A673 (cell line): ENCODE measurements at regions of chr1 and their contacts with region 1.

Region 1: DNA sequence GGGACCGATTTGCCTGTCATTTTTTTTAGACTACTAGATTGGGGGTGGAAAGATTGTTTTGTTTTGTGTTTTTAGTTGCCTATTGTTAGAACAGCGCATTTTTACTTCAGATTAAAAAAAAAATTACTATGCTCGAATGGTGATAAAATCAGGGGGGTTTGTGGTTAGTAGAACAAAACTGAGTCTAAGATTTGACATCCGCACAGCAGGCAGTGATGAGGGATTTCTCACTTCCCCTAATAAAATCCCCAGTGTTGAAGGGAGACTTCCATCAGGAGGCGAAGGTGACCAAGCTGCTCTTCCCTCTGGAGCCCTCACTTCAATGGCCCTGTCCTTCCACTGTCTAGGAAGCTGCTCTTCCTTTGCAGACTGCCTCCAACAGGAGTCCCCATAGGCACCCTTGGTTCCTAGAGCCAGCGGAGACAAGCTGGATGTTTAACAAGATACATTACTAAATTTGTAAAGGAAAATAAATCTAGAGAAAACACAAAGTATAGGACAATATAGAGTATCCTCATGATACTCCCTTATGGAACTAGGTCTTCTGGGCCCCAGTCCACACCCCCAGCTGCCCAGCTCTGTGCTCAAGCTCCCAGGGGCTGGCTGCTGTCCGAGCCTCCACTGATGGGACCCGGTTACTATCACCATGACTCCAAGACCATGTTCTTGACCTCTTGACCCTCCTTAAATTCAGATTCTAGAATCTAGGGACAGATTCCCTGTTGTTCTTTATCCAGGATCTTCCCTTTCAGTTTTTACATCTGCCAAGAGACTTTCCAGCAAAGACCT is 31.0 kb downstream of the TENT5C start:
- DNase-seq: no peak
- H3K4me3 ChIP-seq: no peak overlapping the region
- H3K27ac ChIP-seq: no peak overlapping the region
- H3K4me1 ChIP-seq: no peaks in the 10 kb centered on the region
- H3K27me3 ChIP-seq: no peaks in the 10 kb centered on the region
- CTCF ChIP-seq: no peak

Region 2: GRCh38 chr1:117656202-117656641 is 19.4 kb after region 1 on chr1:
- CTCF ChIA-PET with region 1: no interaction called
- POLR2A ChIA-PET with region 1: no interaction called
- intact Hi-C with region 1: loop called (anchors 2 kb)
- DNase-seq: no peak
- H3K4me3 ChIP-seq: no peak overlapping the region
- H3K27ac ChIP-seq: no peak overlapping the region
- H3K4me1 ChIP-seq: no peaks in the 10 kb centered on the region
- H3K27me3 ChIP-seq: no peaks in the 10 kb centered on the region
- CTCF ChIP-seq: no peak

Region 3: GRCh38 chr1:117695796-117696490 is 59.1 kb after region 1 on chr1:
- CTCF ChIA-PET with region 1: no interaction called
- POLR2A ChIA-PET with region 1: no interaction called
- intact Hi-C with region 1: no loop called
- DNase-seq: no peak
- H3K4me3 ChIP-seq: no peak overlapping the region
- H3K27ac ChIP-seq: no peak overlapping the region
- H3K4me1 ChIP-seq: no peaks in the 10 kb centered on the region
- H3K27me3 ChIP-seq: peaks cover 20% of the 10 kb centered on the region
- CTCF ChIP-seq: no peak

Region 4: GRCh38 chr1:117895482-117896114 is 258.8 kb after region 1 on chr1:
- CTCF ChIA-PET with region 1: no interaction called
- POLR2A ChIA-PET with region 1: no interaction called
- intact Hi-C with region 1: no loop called
- DNase-seq: peak; percentile 77
- H3K4me3 ChIP-seq: no peak overlapping the region
- H3K27ac ChIP-seq: no peak overlapping the region
- H3K4me1 ChIP-seq: no peaks in the 10 kb centered on the region
- H3K27me3 ChIP-seq: no peaks in the 10 kb centered on the region
- CTCF ChIP-seq: peak; percentile 83